IMR-90 (cell line): ENCODE measurements at regions of chrX and their contacts with region 1.

Region 1: DNA sequence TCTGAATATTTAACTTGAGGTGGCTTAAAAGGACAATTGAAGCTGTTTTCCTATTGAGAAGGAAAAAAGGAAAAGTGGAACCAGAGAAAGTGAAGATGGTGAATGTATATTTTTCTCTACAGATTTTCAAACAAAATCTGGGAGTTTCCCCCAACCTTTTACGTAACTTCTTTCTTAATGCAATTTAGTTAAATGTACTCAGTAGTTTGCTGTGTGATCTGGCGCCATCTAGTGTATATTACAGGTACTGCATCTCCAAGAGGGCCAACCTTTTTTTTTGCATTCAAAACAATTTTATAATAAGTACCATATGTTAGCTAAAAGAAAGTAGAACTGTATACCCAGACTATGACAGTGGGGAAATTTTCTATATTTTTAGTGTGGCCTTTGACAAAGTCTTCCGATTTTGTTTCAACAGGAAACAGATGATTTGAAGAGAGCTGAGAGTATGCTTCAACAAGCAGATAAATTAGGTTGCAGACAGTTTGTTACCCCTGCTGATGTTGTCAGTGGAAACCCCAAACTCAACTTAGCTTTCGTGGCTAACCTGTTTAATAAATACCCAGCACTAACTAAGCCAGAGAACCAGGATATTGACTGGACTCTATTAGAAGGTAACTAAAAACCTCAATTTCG is 82.0 kb downstream of the PLS3 start:
- DNase-seq: peak; percentile 77
- ATAC-seq: peak; percentile 85
- H3K4me3 ChIP-seq: no peak overlapping the region
- H3K27ac ChIP-seq: no peak overlapping the region
- H3K4me1 ChIP-seq: no peaks in the 10 kb centered on the region
- H3K27me3 ChIP-seq: peaks cover 2% of the 10 kb centered on the region; the same call in 1 of the 2 replicates
- CTCF ChIP-seq: peak; percentile 94
- POLR2A ChIP-seq: no peak
- RAD21 ChIP-seq: peak; percentile 83

Region 2: GRCh38 chrX:115318139-115318538 is 324.9 kb before region 1 on chrX:
- CTCF ChIA-PET with region 1: no interaction called
- POLR2A ChIA-PET with region 1: interaction called, 14 read pairs
- dilution Hi-C with region 1: no loop called
- in situ Hi-C with region 1: no loop called
- intact Hi-C with region 1: no loop called
- DNase-seq: no peak
- ATAC-seq: no peak
- H3K4me3 ChIP-seq: no peak overlapping the region
- H3K27ac ChIP-seq: no peak overlapping the region
- H3K4me1 ChIP-seq: no peaks in the 10 kb centered on the region
- H3K27me3 ChIP-seq: peaks cover 3% of the 10 kb centered on the region
- CTCF ChIP-seq: no peak
- POLR2A ChIP-seq: no peak
- RAD21 ChIP-seq: no peak

Region 3: GRCh38 chrX:115330498-115331168 is 312.4 kb before region 1 on chrX:
- CTCF ChIA-PET with region 1: interaction called, 9 read pairs
- POLR2A ChIA-PET with region 1: no interaction called
- dilution Hi-C with region 1: no loop called
- in situ Hi-C with region 1: loop called (anchors 5 kb)
- intact Hi-C with region 1: loop called (anchors 1 kb)
- DNase-seq: peak; percentile 76
- ATAC-seq: peak; percentile 76
- H3K4me3 ChIP-seq: no peak overlapping the region
- H3K27ac ChIP-seq: no peak overlapping the region
- H3K4me1 ChIP-seq: no peaks in the 10 kb centered on the region
- H3K27me3 ChIP-seq: peaks cover 8% of the 10 kb centered on the region
- CTCF ChIP-seq: peak; percentile 87
- POLR2A ChIP-seq: no peak
- RAD21 ChIP-seq: peak; percentile 88

Region 4: GRCh38 chrX:115560978-115561604 is 81.9 kb before region 1 on chrX and contains the start of gene PLS3:
- CTCF ChIA-PET with region 1: interaction called, 5 read pairs
- POLR2A ChIA-PET with region 1: no interaction called
- dilution Hi-C with region 1: no loop called
- in situ Hi-C with region 1: no loop called
- intact Hi-C with region 1: loop called (anchors 1 kb)
- DNase-seq: peak; percentile 83
- ATAC-seq: peak; percentile 86
- H3K4me3 ChIP-seq: peak within 1 kb of the TSS; percentile 99
- H3K27ac ChIP-seq: peak within 1 kb of the TSS; percentile 99
- H3K4me1 ChIP-seq: peaks cover 3% of the 10 kb centered on the region
- H3K27me3 ChIP-seq: peaks cover 2% of the 10 kb centered on the region; the same call in 1 of the 2 replicates
- CTCF ChIP-seq: no peak
- POLR2A ChIP-seq: peak; percentile 79
- RAD21 ChIP-seq: no peak
- total RNA-seq, gene PLS3: 252 and 370 TPM in 2 replicates

Region 5: DNA sequence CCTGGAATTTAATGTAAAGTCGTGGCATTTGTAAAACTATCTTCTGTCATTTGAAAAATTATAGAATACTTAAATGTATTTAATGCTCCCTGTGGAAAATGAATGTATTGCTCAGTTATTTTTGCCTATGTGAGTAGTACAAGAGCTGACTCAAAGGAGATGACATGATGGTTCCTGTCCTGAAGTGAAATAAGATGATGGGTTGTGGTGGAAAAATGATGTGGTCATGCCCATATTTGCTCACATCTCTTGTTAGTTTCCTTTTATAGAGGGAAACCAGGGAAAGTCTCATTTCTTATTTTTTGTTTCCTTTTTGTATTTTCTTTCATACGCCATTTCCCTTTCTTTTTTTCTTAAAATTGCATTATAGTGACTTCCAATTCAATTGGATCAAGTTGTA is 58.3 kb before region 1 on chrX:
- CTCF ChIA-PET with region 1: interaction called, 3 read pairs
- POLR2A ChIA-PET with region 1: no interaction called
- dilution Hi-C with region 1: no loop called
- in situ Hi-C with region 1: no loop called
- intact Hi-C with region 1: loop called (anchors 5 kb)
- DNase-seq: peak; percentile 64
- ATAC-seq: no peak; the same call in 1 of the 2 replicates
- H3K4me3 ChIP-seq: no peak overlapping the region
- H3K27ac ChIP-seq: no peak overlapping the region
- H3K4me1 ChIP-seq: 0 out of 2 replicates have a peak, but pooled peaks cover 2% of the 10 kb centered on the region
- H3K27me3 ChIP-seq: peaks cover 3% of the 10 kb centered on the region
- CTCF ChIP-seq: no peak
- POLR2A ChIP-seq: no peak
- RAD21 ChIP-seq: no peak

Region 6: DNA sequence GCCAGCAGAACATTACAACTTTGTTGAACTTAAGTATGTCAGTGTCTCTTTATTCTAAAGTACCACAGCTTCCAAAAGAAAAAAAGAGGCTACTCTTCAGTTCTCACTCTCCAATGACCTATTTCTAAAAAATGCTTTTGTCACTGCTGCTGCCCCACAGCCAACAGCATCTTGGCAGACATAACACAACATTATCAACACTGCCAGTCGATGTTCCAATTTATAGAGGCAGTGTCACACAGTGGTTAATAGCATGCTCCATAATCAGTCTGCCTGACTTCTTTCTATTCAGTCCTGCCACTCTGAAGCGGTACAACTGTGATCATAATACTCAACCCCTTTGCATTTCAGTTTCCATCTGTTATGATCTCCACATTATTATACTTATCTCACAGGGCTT is 12.8 kb before region 1 on chrX:
- CTCF ChIA-PET with region 1: interaction called, 4 read pairs
- POLR2A ChIA-PET with region 1: interaction called, 11 read pairs
- dilution Hi-C with region 1: no loop called
- in situ Hi-C with region 1: no loop called
- intact Hi-C with region 1: no loop called
- DNase-seq: no peak
- ATAC-seq: no peak
- H3K4me3 ChIP-seq: no peak overlapping the region
- H3K27ac ChIP-seq: no peak overlapping the region
- H3K4me1 ChIP-seq: peaks cover 2% of the 10 kb centered on the region; the same call in 1 of the 2 replicates
- H3K27me3 ChIP-seq: no peaks in the 10 kb centered on the region; the same call in 1 of the 2 replicates
- CTCF ChIP-seq: no peak
- POLR2A ChIP-seq: no peak
- RAD21 ChIP-seq: no peak